ENCODE measurements at regions of chr7 and their contacts with region 1.

Region 1: GRCh38 chr7:130649004-130649790 is 19.4 kb downstream of the COPG2 start:
- DNase-seq: peak; percentile 5
- H3K4me3 Mint-ChIP-seq: peak overlapping the region; percentile 54
- H3K27ac Mint-ChIP-seq: peak overlapping the region; percentile 85
- H3K4me1 Mint-ChIP-seq: peaks cover 40% of the 10 kb centered on the region
- H3K27me3 Mint-ChIP-seq: no peaks in the 10 kb centered on the region

Region 2: DNA sequence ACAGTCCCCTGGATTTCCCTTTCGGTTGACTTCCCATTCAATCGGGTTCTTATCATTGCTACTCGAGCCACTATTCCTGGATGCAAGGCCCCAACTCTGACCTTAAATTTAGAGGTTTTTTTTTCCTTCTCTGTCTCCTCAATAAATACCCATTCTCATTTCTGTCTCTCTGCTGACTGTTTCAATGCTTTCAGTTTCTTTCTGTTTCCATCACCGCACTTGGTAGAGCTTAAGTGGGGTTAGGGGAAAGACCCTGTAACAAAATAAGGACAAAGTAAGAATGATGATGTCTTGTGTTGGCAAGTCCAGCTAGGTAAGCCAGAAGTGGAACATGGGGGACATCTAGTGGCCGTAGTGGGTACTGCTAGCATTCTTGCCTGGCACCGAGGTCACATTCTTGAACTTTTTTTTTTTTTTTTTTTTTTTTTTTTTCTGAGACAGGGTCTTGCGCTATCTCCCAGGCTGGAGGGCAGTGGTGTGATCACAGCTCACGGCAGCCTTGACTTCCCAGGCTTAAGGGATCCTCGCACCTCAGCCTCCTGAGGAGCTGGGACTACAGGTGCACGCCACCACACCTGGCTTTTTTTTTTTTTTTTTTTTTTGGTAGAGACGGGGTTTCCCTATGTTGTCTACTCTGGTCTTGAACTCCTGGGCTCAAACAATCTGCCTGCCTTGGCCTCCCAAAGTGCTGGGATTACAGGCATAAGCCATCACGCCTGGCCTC is 638.3 kb before region 1 on chr7:
- intact Hi-C with region 1: no loop called
- DNase-seq: peak; percentile 76
- H3K4me3 Mint-ChIP-seq: no peak overlapping the region
- H3K27ac Mint-ChIP-seq: peak overlapping the region; percentile 75
- H3K4me1 Mint-ChIP-seq: peaks cover 5% of the 10 kb centered on the region
- H3K27me3 Mint-ChIP-seq: no peaks in the 10 kb centered on the region

Region 3: DNA sequence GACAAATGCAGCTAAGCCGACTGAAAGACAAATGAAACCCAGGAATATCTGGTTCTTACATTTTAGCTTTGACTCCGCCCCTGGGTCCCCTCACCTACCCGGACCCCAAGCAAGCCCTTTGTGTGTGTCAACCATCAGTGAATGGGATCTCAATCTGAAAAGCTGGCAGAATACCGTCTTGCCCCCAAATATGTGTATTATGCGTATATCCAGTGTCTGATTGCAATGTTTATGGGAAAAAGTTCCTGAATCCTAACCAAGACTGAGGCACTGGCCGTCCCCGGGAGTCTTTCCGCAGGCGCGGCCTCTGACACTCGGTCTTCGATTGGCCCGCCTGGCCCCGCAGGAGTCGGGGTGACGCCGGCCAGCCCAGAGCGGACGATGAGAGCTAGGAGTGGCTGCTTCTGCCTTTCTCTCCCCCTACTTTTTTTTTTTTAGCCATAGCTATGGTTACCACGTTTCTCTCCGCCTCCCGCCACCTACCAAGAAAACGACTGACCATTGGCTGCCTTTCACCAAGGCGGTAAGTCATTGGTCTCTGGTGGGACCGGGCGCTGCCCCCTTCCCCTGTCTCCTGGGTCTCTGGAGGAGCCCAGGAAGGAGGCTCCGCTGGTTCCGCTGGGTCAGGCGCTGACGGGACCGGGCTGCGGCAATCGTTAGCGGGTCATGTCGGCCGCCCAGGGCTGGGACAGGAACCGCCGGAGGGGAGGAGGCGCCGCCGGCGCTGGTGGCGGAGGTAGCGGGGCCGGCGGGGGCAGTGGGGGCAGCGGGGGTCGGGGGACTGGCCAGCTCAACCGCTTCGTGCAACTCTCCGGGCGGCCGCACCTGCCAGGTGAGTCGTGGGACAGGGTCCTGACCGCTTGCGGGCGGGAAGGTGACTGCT is 579.0 kb before region 1 on chr7 and contains the start of gene KLHDC10:
- intact Hi-C with region 1: loop called (anchors 5 kb)
- DNase-seq: peak; percentile 93
- H3K4me3 Mint-ChIP-seq: peak within 1 kb of the TSS; percentile 93
- H3K27ac Mint-ChIP-seq: peak within 1 kb of the TSS; percentile 91
- H3K4me1 Mint-ChIP-seq: peaks cover 39% of the 10 kb centered on the region
- H3K27me3 Mint-ChIP-seq: no peaks in the 10 kb centered on the region
- total RNA-seq, gene KLHDC10: 13.2 and 15.6 TPM in 2 replicates

Region 4: GRCh38 chr7:130277763-130278643 is 371.2 kb before region 1 on chr7:
- intact Hi-C with region 1: loop called (anchors 1 kb)
- DNase-seq: no peak
- H3K4me3 Mint-ChIP-seq: no peak overlapping the region
- H3K27ac Mint-ChIP-seq: peak overlapping the region; percentile 73
- H3K4me1 Mint-ChIP-seq: peaks cover 24% of the 10 kb centered on the region
- H3K27me3 Mint-ChIP-seq: peaks cover 2% of the 10 kb centered on the region

Region 5: GRCh38 chr7:130440527-130441365 is 208.5 kb before region 1 on chr7 and contains the start of gene CEP41:
- intact Hi-C with region 1: loop called (anchors 2 kb)
- DNase-seq: peak; percentile 90
- H3K4me3 Mint-ChIP-seq: peak within 1 kb of the TSS; percentile 97
- H3K27ac Mint-ChIP-seq: peak within 1 kb of the TSS; percentile 95
- H3K4me1 Mint-ChIP-seq: peaks cover 44% of the 10 kb centered on the region
- H3K27me3 Mint-ChIP-seq: no peaks in the 10 kb centered on the region
- total RNA-seq, gene CEP41: 17.1 and 17.8 TPM in 2 replicates

Region 6: DNA sequence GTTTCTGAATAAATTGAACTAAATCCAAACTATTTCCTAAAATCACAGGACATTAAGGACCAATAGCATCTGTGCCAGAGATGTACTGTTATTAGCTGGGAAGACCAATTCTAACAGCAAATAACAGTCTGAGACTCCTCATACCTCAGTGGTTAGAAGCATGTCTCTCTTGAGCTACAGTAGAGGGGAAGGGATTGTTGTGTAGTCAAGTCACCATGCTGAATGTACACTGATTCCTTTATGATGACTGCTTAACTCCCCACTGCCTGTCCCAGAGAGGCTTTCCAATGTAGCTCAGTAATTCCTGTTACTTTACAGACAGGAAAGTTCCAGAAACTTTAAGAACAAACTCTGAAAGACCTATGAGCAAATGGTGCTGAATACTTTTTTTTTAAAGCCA is 143.4 kb before region 1 on chr7:
- intact Hi-C with region 1: no loop called
- DNase-seq: no peak
- H3K4me3 Mint-ChIP-seq: no peak overlapping the region
- H3K27ac Mint-ChIP-seq: no peak overlapping the region
- H3K4me1 Mint-ChIP-seq: no peaks in the 10 kb centered on the region
- H3K27me3 Mint-ChIP-seq: no peaks in the 10 kb centered on the region

Region 7: GRCh38 chr7:130595986-130596385 is 53.2 kb before region 1 on chr7:
- intact Hi-C with region 1: no loop called
- DNase-seq: no peak
- H3K4me3 Mint-ChIP-seq: no peak overlapping the region
- H3K27ac Mint-ChIP-seq: no peak overlapping the region
- H3K4me1 Mint-ChIP-seq: no peaks in the 10 kb centered on the region
- H3K27me3 Mint-ChIP-seq: no peaks in the 10 kb centered on the region

Region 8: GRCh38 chr7:130733931-130734814 is 85.0 kb after region 1 on chr7 and contains the start of gene KLF14:
- intact Hi-C with region 1: loop called (anchors 5 kb)
- DNase-seq: peak; percentile 12
- H3K4me3 Mint-ChIP-seq: peak within 1 kb of the TSS; percentile 83
- H3K27ac Mint-ChIP-seq: no peak within 1 kb of the TSS
- H3K4me1 Mint-ChIP-seq: peaks cover 8% of the 10 kb centered on the region
- H3K27me3 Mint-ChIP-seq: peaks cover 69% of the 10 kb centered on the region
- total RNA-seq, gene KLF14: not detected in 2 replicates

Region 9: DNA sequence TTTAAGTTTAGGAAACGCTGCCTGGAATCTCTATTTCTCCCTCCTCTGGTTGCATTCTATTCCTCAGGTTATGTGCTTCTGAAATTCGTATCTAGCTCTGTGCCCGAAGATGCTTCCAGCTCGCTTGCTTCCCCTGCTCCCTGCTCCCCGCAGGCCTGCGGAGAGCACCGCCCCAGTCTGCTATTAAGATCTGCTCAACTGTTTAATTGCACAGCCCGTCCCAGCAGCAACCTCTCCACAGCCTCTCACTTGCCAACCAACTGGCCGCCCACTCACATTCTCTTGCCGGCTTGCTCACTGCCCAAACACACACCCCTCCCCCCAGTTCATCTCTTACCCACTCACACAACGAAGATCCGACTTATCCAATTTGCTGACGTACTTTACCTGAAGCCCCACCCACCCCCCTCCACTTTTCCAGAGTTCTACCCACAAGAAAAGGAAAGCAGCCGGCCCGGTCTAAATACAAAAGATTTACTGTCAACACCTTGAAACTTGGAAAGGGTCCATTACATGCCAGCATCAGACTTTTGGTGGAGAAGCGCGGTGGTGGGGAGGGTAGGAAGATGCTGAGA is 252.1 kb after region 1 on chr7:
- intact Hi-C with region 1: no loop called
- DNase-seq: no peak
- H3K4me3 Mint-ChIP-seq: no peak overlapping the region
- H3K27ac Mint-ChIP-seq: peak overlapping the region; percentile 86
- H3K4me1 Mint-ChIP-seq: peaks cover 87% of the 10 kb centered on the region
- H3K27me3 Mint-ChIP-seq: no peaks in the 10 kb centered on the region

Region 10: DNA sequence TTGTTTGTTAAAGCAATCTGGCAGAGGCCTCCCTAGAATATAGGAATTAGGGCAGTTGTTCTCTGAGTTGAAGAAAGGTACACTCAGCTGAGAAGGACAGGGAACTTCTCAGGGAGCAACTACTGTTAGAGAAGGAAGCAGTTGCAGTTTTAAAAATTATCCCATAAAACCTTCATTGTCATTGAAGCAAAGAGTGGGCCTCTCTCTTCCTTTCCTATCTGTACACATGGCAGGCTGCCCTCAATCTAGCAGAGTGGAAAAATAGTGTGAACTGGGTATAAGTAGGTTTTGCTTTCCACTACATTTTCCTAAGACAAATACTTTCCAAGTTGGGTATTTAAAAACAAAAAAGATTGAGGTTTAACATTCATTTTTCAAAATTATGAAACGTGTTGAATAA is 321.5 kb after region 1 on chr7:
- intact Hi-C with region 1: loop called (anchors 1 kb)
- DNase-seq: no peak
- H3K4me3 Mint-ChIP-seq: peak overlapping the region; percentile 37
- H3K27ac Mint-ChIP-seq: peak overlapping the region; percentile 94
- H3K4me1 Mint-ChIP-seq: peaks cover 76% of the 10 kb centered on the region
- H3K27me3 Mint-ChIP-seq: no peaks in the 10 kb centered on the region

Region 11: GRCh38 chr7:131188367-131189339 is 539.5 kb after region 1 on chr7:
- intact Hi-C with region 1: loop called (anchors 2 kb)
- DNase-seq: peak; percentile 59
- H3K4me3 Mint-ChIP-seq: peak overlapping the region; percentile 52
- H3K27ac Mint-ChIP-seq: peak overlapping the region; percentile 91
- H3K4me1 Mint-ChIP-seq: peaks cover 59% of the 10 kb centered on the region
- H3K27me3 Mint-ChIP-seq: no peaks in the 10 kb centered on the region